BJ (cell line): ENCODE measurements at regions of chr10 and their contacts with region 1.

Region 1: GRCh38 chr10:80498833-80499741 is 38.6 kb upstream of the SH2D4B start:
- DNase-seq: peak; percentile 90
- H3K4me3 ChIP-seq: no peak overlapping the region
- H3K27me3 ChIP-seq: no peaks in the 10 kb centered on the region
- CTCF ChIP-seq: 0 out of 2 replicates have a peak, but pooled peaks have one; percentile 14

Region 2: GRCh38 chr10:80460399-80461207 is 38.5 kb before region 1 on chr10:
- CTCF ChIA-PET with region 1: interaction called, 661 read pairs
- POLR2A ChIA-PET with region 1: interaction called, 31 read pairs
- DNase-seq: no peak
- H3K4me3 ChIP-seq: no peak overlapping the region
- H3K27me3 ChIP-seq: no peaks in the 10 kb centered on the region
- CTCF ChIP-seq: no peak

Region 3: DNA sequence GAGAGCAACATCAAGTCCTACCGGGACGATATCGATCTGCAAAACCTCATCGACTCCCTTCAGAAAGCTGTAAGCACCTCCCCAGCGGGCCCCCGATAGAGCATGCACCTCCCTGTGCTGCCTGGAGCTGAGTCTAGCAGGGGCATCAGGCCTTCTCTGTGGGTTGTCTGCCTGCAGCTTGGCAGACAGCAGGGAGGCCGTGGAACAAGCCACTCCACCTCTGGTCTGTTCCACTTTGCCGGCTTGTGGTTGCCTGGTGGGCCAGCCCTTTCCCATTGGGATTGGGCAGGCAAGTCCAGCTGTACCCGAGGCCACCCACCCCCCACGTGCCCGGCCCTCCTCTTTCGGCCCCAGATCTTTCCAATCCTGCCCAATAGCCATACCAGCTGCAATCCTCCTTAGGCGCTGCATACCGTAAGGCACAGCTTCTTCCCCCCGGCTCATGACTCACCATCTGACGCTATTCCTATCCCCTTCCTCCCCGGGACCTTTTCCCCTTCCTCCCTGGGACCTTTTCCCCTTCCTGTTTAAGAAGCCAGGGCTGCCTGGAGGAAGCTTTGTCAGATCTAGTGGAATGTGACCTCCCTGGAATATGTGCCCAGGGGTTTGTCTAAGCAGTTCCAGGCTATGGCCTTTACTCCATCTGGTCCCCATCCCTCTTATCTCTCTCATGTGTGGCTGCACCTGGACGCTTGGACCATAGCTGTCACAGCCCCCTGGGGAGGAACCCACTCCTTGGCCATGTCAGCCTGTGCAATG is 10.5 kb after region 1 on chr10:
- CTCF ChIA-PET with region 1: interaction called, 11 read pairs
- POLR2A ChIA-PET with region 1: no interaction called
- DNase-seq: peak; percentile 38
- H3K4me3 ChIP-seq: no peak overlapping the region
- H3K27me3 ChIP-seq: no peaks in the 10 kb centered on the region
- CTCF ChIP-seq: no peak

Region 4: GRCh38 chr10:81135851-81136250 is 636.8 kb after region 1 on chr10:
- CTCF ChIA-PET with region 1: no interaction called
- POLR2A ChIA-PET with region 1: no interaction called
- DNase-seq: no peak
- H3K4me3 ChIP-seq: no peak overlapping the region
- H3K27me3 ChIP-seq: no peaks in the 10 kb centered on the region
- CTCF ChIP-seq: no peak